ENCODE measurements at regions of chr19 and their contacts with region 1.

Region 1: GRCh38 chr19:6092329-6093286 is 17.7 kb downstream of the RFX2 start:
- DNase-seq: peak; percentile 75 to 95
- H3K4me3 ChIP-seq: peak overlapping the region; percentile 6 to 59
- H3K27ac ChIP-seq: peak overlapping the region; percentile 88 to 92
- H3K4me1 ChIP-seq: peaks cover 18 to 35% of the 10 kb centered on the region in 2 donors
- H3K27me3 ChIP-seq: no peaks in the 10 kb centered on the region
- CTCF ChIP-seq: peak in 1 of 3 experiments; percentile 10

Region 2: DNA sequence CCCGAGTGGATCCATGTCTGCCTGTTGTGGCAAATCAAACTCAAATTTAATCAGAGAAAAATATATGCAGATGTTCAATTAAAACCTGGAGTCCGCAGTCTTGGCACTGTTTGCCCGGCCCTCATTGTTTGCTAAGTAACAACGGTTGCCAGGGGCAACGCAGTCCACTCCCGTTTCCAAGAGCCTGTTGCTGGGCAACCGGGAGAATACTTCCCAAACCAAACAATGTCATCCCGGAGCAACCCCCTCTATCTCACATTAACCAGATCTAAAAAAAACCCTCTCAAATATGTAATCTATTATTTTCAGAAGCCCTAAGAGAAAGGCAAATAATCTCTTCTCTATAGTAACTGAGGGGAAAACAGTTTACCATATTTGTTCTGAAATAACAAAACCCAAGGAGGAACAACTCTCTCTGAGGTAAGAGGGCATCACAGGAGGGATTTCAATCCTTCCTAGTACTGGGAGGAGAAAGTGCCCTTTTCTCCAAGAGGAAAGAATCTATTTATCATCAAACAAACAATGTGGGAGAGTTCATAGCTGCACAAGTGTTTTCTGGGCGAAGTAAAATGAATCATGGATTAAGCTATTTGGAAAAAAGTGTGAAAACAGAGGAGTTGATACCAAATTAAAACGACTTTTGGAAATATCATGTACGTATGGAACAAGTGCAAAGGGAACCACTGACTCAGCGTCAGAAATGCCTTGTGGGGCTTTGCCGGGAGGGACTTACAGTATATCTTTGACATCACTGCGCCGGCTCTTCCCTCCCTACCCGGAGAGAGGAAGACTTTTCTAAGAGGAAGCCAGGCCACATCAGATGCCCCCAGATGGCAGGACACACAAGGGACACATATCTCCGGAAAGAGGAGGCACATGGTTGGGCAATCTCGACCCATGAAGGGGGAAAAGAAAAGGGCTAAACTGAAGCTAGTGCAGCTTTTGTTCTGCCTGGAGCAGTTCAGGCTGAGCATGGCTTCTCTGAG is 25.7 kb before region 1 on chr19:
- intact Hi-C with region 1: loop called (anchors 2 kb)
- DNase-seq: peak; percentile 71 to 98
- H3K4me3 ChIP-seq: peak overlapping the region in 1 of 2 donors; percentile 5
- H3K27ac ChIP-seq: peak overlapping the region; percentile 76 to 85
- H3K4me1 ChIP-seq: peaks cover 17 to 75% of the 10 kb centered on the region in 2 donors
- H3K27me3 ChIP-seq: no peaks in the 10 kb centered on the region
- CTCF ChIP-seq: no peak

Region 3: DNA sequence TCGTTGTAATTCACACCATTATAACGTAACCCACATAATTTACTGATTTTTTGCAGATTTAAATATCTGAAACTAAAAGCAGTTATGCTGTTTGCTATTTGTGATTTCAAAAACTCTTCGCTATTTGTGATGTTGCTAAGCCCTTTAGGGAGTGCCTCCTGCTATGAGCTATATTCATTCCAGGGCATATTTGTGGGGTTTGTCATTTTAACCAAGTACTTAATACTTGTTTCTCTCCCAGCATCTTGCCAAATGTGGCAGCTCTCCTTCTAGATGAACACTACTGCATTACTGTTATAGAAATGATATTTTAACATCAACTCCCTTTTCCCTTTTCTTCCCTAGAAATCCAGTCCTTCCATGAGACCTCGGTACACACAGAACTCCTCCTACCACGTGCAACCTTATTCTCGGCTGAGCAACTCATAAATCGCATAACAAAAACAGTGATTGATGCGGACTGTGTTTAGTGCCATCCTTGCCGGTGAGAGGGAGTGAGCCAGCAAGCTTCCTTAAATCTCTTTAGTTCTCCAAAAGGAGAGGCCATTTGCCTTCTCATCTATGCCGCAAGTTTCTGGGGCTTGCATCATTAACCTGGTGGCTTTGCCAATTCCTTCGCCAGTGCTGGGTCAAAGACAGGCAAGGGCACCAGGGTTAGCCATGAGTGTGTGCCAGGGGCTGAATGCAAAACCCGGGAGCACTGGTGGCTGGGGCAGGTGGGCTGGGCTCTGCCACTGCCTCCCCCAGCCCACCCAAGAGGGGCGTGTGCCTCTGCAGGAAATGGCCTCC is 15.7 kb before region 1 on chr19:
- intact Hi-C with region 1: loop called (anchors 1 kb)
- DNase-seq: peak in 1 of 2 donors; percentile 71
- H3K4me3 ChIP-seq: peak overlapping the region in 1 of 2 donors; percentile 37
- H3K27ac ChIP-seq: peak overlapping the region; percentile 78 to 89
- H3K4me1 ChIP-seq: peaks cover 8 to 22% of the 10 kb centered on the region in 2 donors
- H3K27me3 ChIP-seq: no peaks in the 10 kb centered on the region
- CTCF ChIP-seq: no peak